Naive thymus-derived CD4-positive, alpha-beta T cell (primary cell): ENCODE measurements at regions of chr14 and their contacts with region 1.

Region 1: GRCh38 chr14:22519877-22520685 is 68.9 kb downstream of the DAD1 start:
- DNase-seq: peak in 1 of 9 donors; percentile 31
- ATAC-seq: peak; percentile 33
- H3K4me3 ChIP-seq: peak overlapping the region; percentile 56
- H3K4me3 Mint-ChIP-seq: peak overlapping the region; percentile 79 to 92 (median 89)
- H3K27ac ChIP-seq: peak overlapping the region; percentile 90
- H3K27ac Mint-ChIP-seq: peak overlapping the region; percentile 93 to 99 (median 96)
- H3K4me1 ChIP-seq: peaks cover 90 to 91% of the 10 kb centered on the region in 2 donors
- H3K4me1 Mint-ChIP-seq: peaks cover 28 to 99% (median 94%) of the 10 kb centered on the region in 7 donors
- H3K27me3 ChIP-seq: no peaks in the 10 kb centered on the region
- H3K27me3 Mint-ChIP-seq: no peaks in the 10 kb centered on the region

Region 2: GRCh38 chr14:21711360-21711961 is 808.6 kb before region 1 on chr14:
- CTCF ChIA-PET with region 1: no interaction called
- POLR2A ChIA-PET with region 1: no interaction called
- intact Hi-C with region 1: loop called in 1 of 2 experiments (anchors 5 kb)
- DNase-seq: peak in 5 of 9 donors; percentile 25 to 57 (median 37)
- ATAC-seq: peak; percentile 80
- H3K4me3 ChIP-seq: no peak overlapping the region
- H3K4me3 Mint-ChIP-seq: peak overlapping the region; percentile 25 to 82 (median 67)
- H3K27ac ChIP-seq: no peak overlapping the region
- H3K27ac Mint-ChIP-seq: peak overlapping the region in 7 of 9 donors; percentile 7 to 91 (median 72)
- H3K4me1 ChIP-seq: no peaks in the 10 kb centered on the region
- H3K4me1 Mint-ChIP-seq: peaks cover 0 to 8% (median 5%) of the 10 kb centered on the region in 7 donors
- H3K27me3 ChIP-seq: peaks cover 0 to 3% of the 10 kb centered on the region in 2 donors
- H3K27me3 Mint-ChIP-seq: peaks cover 9 to 44% (median 23%) of the 10 kb centered on the region in 5 donors

Region 3: GRCh38 chr14:21723431-21724045 is 796.5 kb before region 1 on chr14:
- CTCF ChIA-PET with region 1: interaction called, 3 read pairs
- POLR2A ChIA-PET with region 1: interaction called, 3 read pairs
- intact Hi-C with region 1: loop called in 1 of 2 experiments (anchors 5 kb)
- DNase-seq: peak in 5 of 9 donors; percentile 33 to 37 (median 36)
- ATAC-seq: peak; percentile 73
- H3K4me3 ChIP-seq: no peak overlapping the region
- H3K4me3 Mint-ChIP-seq: peak overlapping the region; percentile 33 to 94 (median 76)
- H3K27ac ChIP-seq: peak overlapping the region; percentile 33
- H3K27ac Mint-ChIP-seq: peak overlapping the region in 8 of 9 donors; percentile 15 to 80 (median 72)
- H3K4me1 ChIP-seq: no peaks in the 10 kb centered on the region
- H3K4me1 Mint-ChIP-seq: peaks cover 0 to 3% (median 0%) of the 10 kb centered on the region in 7 donors
- H3K27me3 ChIP-seq: no peaks in the 10 kb centered on the region
- H3K27me3 Mint-ChIP-seq: peaks cover 34 to 38% (median 36%) of the 10 kb centered on the region in 5 donors

Region 4: DNA sequence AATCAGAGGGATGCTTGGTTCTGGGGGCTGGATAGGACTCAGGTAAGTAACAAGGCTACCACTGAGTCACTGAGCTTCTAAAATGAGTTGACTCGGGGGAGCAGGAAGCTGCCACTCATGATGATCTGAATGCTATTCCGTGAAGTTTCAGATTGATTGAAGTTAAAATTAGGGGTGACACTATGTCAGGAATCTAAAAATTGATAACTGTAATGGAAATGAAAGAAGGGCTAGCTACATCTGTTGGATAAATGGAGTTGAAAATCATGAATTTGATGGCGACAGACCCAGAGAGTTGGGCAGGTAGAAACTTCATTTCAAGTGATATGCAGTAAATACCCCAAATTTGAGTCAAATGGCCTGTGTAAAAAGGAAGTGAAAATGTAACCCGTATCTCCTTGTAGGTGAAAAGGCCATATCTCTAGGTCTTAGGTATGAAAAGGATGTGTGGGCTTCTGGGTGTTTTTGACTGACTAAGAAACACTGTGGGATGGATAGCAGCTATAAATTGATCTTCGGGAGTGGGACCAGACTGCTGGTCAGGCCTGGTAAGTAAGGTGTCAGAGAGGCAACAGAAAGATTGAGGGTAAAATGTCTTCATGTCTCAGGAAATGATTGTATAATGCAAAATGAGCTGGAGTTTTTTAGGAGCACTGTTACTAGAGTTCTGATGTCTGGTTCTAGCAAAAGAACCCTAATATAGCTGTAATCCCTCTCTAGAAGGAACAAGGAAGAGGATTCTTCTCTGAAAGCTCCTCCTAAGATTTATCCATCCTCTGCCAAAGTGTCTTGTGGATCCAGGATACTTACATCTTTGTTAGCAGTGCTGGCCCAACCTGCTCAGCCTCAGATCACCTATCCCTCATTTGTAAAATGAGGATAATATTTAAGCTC is 11.6 kb after region 1 on chr14:
- CTCF ChIA-PET with region 1: interaction called, 7 read pairs
- POLR2A ChIA-PET with region 1: interaction called, 554 read pairs
- intact Hi-C with region 1: loop called (anchors 1 to 2 kb)
- DNase-seq: peak in 2 of 9 donors; percentile 55 to 61
- ATAC-seq: peak; percentile 51
- H3K4me3 ChIP-seq: peak overlapping the region; percentile 44
- H3K4me3 Mint-ChIP-seq: peak overlapping the region; percentile 79 to 92 (median 86)
- H3K27ac ChIP-seq: peak overlapping the region; percentile 90
- H3K27ac Mint-ChIP-seq: peak overlapping the region; percentile 90 to 99 (median 94)
- H3K4me1 ChIP-seq: peaks cover 77 to 90% of the 10 kb centered on the region in 2 donors
- H3K4me1 Mint-ChIP-seq: peaks cover 56 to 98% (median 92%) of the 10 kb centered on the region in 7 donors
- H3K27me3 ChIP-seq: no peaks in the 10 kb centered on the region
- H3K27me3 Mint-ChIP-seq: no peaks in the 10 kb centered on the region

Region 5: DNA sequence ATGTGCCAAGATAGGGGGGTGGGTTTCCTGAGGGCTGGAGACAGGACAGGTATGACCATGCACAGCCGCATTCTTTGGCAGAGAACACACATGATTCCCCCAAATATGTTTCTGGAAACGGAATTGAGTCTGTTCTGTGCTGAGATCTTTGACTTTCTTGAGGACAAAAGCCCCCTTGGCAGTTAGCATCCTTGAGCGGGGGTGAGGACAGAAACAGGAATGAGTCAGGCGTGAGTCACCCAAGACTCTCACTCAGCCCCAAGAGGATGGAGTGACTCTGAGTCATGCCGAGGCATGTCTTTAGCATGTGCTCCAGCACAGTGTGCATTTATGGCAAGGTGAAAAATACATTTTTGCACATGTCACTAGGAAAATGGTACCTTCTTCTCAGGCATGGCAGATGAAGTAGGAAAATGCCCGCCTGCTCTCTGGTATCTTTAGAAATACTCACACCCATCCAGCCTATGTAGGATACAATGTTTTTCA is 16.8 kb after region 1 on chr14:
- CTCF ChIA-PET with region 1: interaction called, 7 read pairs
- POLR2A ChIA-PET with region 1: interaction called, 554 read pairs
- intact Hi-C with region 1: loop called (anchors 1 to 2 kb)
- DNase-seq: peak in 2 of 9 donors; percentile 75 to 90
- ATAC-seq: peak; percentile 88
- H3K4me3 ChIP-seq: peak overlapping the region; percentile 46
- H3K4me3 Mint-ChIP-seq: peak overlapping the region; percentile 79 to 93 (median 87)
- H3K27ac ChIP-seq: peak overlapping the region; percentile 90
- H3K27ac Mint-ChIP-seq: peak overlapping the region; percentile 92 to 99 (median 94)
- H3K4me1 ChIP-seq: peaks cover 94 to 97% of the 10 kb centered on the region in 2 donors
- H3K4me1 Mint-ChIP-seq: peaks cover 61 to 100% (median 97%) of the 10 kb centered on the region in 7 donors
- H3K27me3 ChIP-seq: no peaks in the 10 kb centered on the region
- H3K27me3 Mint-ChIP-seq: no peaks in the 10 kb centered on the region

Region 6: DNA sequence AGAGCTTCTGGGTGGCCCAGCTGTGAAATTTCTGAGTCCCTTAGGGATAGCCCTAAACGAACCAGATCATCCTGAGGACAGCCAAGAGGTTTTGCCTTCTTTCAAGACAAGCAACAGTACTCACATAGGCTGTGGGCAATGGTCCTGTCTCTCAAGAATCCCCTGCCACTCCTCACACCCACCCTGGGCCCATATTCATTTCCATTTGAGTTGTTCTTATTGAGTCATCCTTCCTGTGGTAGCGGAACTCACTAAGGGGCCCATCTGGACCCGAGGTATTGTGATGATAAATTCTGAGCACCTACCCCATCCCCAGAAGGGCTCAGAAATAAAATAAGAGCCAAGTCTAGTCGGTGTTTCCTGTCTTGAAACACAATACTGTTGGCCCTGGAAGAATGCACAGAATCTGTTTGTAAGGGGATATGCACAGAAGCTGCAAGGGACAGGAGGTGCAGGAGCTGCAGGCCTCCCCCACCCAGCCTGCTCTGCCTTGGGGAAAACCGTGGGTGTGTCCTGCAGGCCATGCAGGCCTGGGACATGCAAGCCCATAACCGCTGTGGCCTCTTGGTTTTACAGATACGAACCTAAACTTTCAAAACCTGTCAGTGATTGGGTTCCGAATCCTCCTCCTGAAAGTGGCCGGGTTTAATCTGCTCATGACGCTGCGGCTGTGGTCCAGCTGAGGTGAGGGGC is 30.0 kb after region 1 on chr14:
- CTCF ChIA-PET with region 1: interaction called, 17 read pairs
- POLR2A ChIA-PET with region 1: interaction called, 709 read pairs
- intact Hi-C with region 1: loop called in 1 of 2 experiments (anchors 5 kb)
- DNase-seq: peak in 8 of 9 donors; percentile 54 to 86 (median 62)
- ATAC-seq: peak; percentile 57
- H3K4me3 ChIP-seq: peak overlapping the region; percentile 47
- H3K4me3 Mint-ChIP-seq: peak overlapping the region; percentile 79 to 92 (median 82)
- H3K27ac ChIP-seq: peak overlapping the region; percentile 96
- H3K27ac Mint-ChIP-seq: peak overlapping the region; percentile 93 to 99 (median 96)
- H3K4me1 ChIP-seq: peaks cover 97 to 98% of the 10 kb centered on the region in 2 donors
- H3K4me1 Mint-ChIP-seq: peaks cover 67 to 98% (median 96%) of the 10 kb centered on the region in 7 donors
- H3K27me3 ChIP-seq: no peaks in the 10 kb centered on the region
- H3K27me3 Mint-ChIP-seq: no peaks in the 10 kb centered on the region

Region 7: GRCh38 chr14:22952418-22952817 is 432.3 kb after region 1 on chr14:
- CTCF ChIA-PET with region 1: no interaction called
- POLR2A ChIA-PET with region 1: no interaction called
- intact Hi-C with region 1: no loop called
- DNase-seq: no peak
- ATAC-seq: no peak
- H3K4me3 ChIP-seq: no peak overlapping the region
- H3K4me3 Mint-ChIP-seq: no peak overlapping the region
- H3K27ac ChIP-seq: no peak overlapping the region
- H3K27ac Mint-ChIP-seq: no peak overlapping the region
- H3K4me1 ChIP-seq: peaks cover 0 to 6% of the 10 kb centered on the region in 2 donors
- H3K4me1 Mint-ChIP-seq: peaks cover 0 to 28% (median 16%) of the 10 kb centered on the region in 7 donors
- H3K27me3 ChIP-seq: no peaks in the 10 kb centered on the region
- H3K27me3 Mint-ChIP-seq: no peaks in the 10 kb centered on the region